Lower leg skin (tissue), 4 donors: ENCODE measurements at regions of chrX and their contacts with region 1.

Region 1: GRCh38 chrX:130680164-130681035 is 222.6 kb downstream of the ENOX2 start:
- DNase-seq: no peak
- H3K4me3 ChIP-seq: no peak overlapping the region
- CTCF ChIP-seq: no peak
- POLR2A ChIP-seq: no peak

Region 2: DNA sequence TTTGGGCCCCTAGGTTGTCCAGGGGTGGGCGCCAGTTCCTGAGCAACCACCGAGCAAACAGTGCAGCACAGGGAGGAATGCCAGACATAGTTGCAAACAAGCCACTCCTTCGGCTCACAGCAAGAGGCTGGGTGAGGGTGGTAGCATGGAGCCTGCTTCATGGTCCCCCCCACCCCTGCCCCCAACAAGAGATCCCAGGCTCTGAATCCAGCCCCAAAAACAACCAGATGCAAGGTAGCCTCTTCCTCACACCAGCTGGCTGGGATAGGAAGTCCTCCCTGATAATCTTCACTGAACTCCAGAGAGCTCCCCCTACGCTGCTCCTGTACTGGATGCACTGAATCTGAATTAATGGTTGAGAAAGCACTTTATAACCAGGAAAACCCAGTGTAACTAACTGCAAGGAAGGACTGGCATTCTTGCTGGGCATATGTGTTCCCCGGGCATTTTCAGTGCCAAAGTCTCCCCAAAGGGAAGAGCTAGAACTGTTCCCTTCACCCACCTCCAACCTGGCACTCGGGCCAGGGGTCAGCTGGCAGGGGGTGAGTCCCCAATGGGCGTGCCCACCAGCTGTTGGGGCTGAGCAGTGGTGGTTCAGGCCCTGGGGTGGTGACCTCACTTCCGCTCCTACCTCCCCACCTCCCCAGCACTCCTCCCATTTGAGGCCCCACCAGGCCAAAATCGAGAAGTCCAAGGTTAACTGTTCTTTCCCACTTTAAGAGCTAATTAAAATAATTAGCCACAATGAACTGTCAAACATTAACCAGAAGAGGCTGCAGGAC is 571.6 kb before region 1 on chrX:
- intact Hi-C with region 1: loop called (anchors 5 kb)
- DNase-seq: no peak
- H3K4me3 ChIP-seq: peak overlapping the region; percentile 69
- CTCF ChIP-seq: no peak
- POLR2A ChIP-seq: no peak

Region 3: GRCh38 chrX:132041015-132041414 is 1360.6 kb after region 1 on chrX:
- intact Hi-C with region 1: no loop called
- DNase-seq: no peak
- H3K4me3 ChIP-seq: no peak overlapping the region
- CTCF ChIP-seq: no peak
- POLR2A ChIP-seq: no peak

Region 4: DNA sequence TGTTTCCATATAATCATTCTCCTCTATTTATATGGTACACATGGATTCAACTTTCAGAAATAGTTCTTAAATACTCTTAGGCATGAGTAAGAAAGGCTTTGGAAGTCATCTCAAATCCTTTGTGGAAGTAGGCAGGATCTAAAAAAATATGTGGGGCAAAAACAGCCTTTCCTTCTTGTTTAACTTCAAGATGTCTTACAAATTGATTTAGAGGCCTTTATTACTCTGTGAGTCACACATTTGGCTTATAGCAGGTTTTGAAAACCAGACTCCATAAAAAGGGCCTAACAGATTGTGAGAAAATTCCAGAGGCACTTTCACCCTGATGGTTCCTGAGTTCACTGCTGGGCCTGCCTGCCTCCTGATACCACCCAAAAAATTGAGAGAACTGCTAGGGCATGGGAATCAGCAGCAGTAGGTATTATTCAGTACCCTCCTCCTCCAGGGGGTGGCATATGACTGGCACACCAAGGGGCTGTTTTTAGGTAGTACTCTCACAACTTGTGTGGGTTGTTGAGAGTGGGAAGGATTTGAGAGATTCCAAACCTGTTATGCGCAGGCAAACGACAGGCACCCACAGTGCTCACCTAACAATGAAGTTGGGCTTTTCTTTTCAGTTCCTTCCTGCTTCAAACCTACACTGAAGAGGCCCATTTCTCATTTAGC is 1971.2 kb after region 1 on chrX:
- intact Hi-C with region 1: loop called (anchors 5 kb)
- DNase-seq: no peak
- H3K4me3 ChIP-seq: no peak overlapping the region
- CTCF ChIP-seq: no peak
- POLR2A ChIP-seq: no peak